ENCODE measurements at regions of chr6 and their contacts with region 1.

Region 1: GRCh38 chr6:39114704-39115599 is at the start of gene SAYSD1:
- DNase-seq: peak; percentile 89 to 94 (median 93)
- H3K4me3 ChIP-seq: peak within 1 kb of the TSS; percentile 79 to 97
- H3K4me3 Mint-ChIP-seq: peak within 1 kb of the TSS; percentile 97 to 99 (median 98)
- H3K27ac ChIP-seq: peak within 1 kb of the TSS; percentile 79
- H3K27ac Mint-ChIP-seq: peak within 1 kb of the TSS; percentile 92 to 99 (median 98)
- H3K4me1 ChIP-seq: peaks cover 44% of the 10 kb centered on the region
- H3K4me1 Mint-ChIP-seq: peaks cover 40 to 58% (median 48%) of the 10 kb centered on the region in 4 donors
- H3K27me3 ChIP-seq: no peaks in the 10 kb centered on the region
- H3K27me3 Mint-ChIP-seq: no peaks in the 10 kb centered on the region
- total RNA-seq, gene SAYSD1: 21.6 to 22.4 TPM

Region 2: GRCh38 chr6:38702558-38703397 is 412.2 kb before region 1 on chr6 and contains the start of gene GLO1:
- CTCF ChIA-PET with region 1: no interaction called
- POLR2A ChIA-PET with region 1: no interaction called
- intact Hi-C with region 1: loop called (anchors 5 kb)
- DNase-seq: peak; percentile 94 to 98 (median 95)
- H3K4me3 ChIP-seq: peak within 1 kb of the TSS; percentile 56 to 91
- H3K4me3 Mint-ChIP-seq: peak within 1 kb of the TSS; percentile 83 to 96 (median 88)
- H3K27ac ChIP-seq: peak within 1 kb of the TSS; percentile 85
- H3K27ac Mint-ChIP-seq: peak within 1 kb of the TSS; percentile 83 to 98 (median 92)
- H3K4me1 ChIP-seq: peaks cover 11% of the 10 kb centered on the region
- H3K4me1 Mint-ChIP-seq: peaks cover 21 to 38% (median 27%) of the 10 kb centered on the region in 4 donors
- H3K27me3 ChIP-seq: no peaks in the 10 kb centered on the region
- H3K27me3 Mint-ChIP-seq: peaks cover 3 to 7% of the 10 kb centered on the region in 2 donors
- total RNA-seq, gene GLO1: 28.3 to 28.7 TPM

Region 3: GRCh38 chr6:39228992-39229767 is 114.2 kb after region 1 on chr6 and contains the start of gene KCNK5:
- CTCF ChIA-PET with region 1: no interaction called
- POLR2A ChIA-PET with region 1: no interaction called
- intact Hi-C with region 1: loop called (anchors 2 kb)
- DNase-seq: peak; percentile 46 to 66 (median 51)
- H3K4me3 ChIP-seq: peak within 1 kb of the TSS; percentile 69 to 70
- H3K4me3 Mint-ChIP-seq: peak within 1 kb of the TSS; percentile 58 to 86 (median 78)
- H3K27ac ChIP-seq: no peak within 1 kb of the TSS
- H3K27ac Mint-ChIP-seq: peak within 1 kb of the TSS in 4 of 7 donors; percentile 29 to 88 (median 64)
- H3K4me1 ChIP-seq: peaks cover 54% of the 10 kb centered on the region
- H3K4me1 Mint-ChIP-seq: peaks cover 26 to 54% (median 37%) of the 10 kb centered on the region in 4 donors
- H3K27me3 ChIP-seq: no peaks in the 10 kb centered on the region
- H3K27me3 Mint-ChIP-seq: peaks cover 0 to 2% of the 10 kb centered on the region in 2 donors
- total RNA-seq, gene KCNK5: 0.79 to 0.83 TPM

Region 4: GRCh38 chr6:39369987-39370386 is 255.0 kb after region 1 on chr6:
- CTCF ChIA-PET with region 1: no interaction called
- POLR2A ChIA-PET with region 1: no interaction called
- intact Hi-C with region 1: no loop called
- DNase-seq: no peak
- H3K4me3 ChIP-seq: no peak overlapping the region
- H3K4me3 Mint-ChIP-seq: no peak overlapping the region
- H3K27ac ChIP-seq: no peak overlapping the region
- H3K27ac Mint-ChIP-seq: no peak overlapping the region
- H3K4me1 ChIP-seq: no peaks in the 10 kb centered on the region
- H3K4me1 Mint-ChIP-seq: no peaks in the 10 kb centered on the region
- H3K27me3 ChIP-seq: no peaks in the 10 kb centered on the region
- H3K27me3 Mint-ChIP-seq: peaks cover 12 to 23% of the 10 kb centered on the region in 2 donors

Region 5: GRCh38 chr6:39724787-39725631 is 610.1 kb after region 1 on chr6 and contains the start of gene KIF6:
- CTCF ChIA-PET with region 1: no interaction called
- POLR2A ChIA-PET with region 1: no interaction called
- intact Hi-C with region 1: loop called (anchors 10 kb)
- DNase-seq: peak; percentile 58 to 71 (median 66)
- H3K4me3 ChIP-seq: peak within 1 kb of the TSS; percentile 37 to 39
- H3K4me3 Mint-ChIP-seq: peak within 1 kb of the TSS; percentile 89 to 95 (median 92)
- H3K27ac ChIP-seq: no peak within 1 kb of the TSS
- H3K27ac Mint-ChIP-seq: peak within 1 kb of the TSS in 4 of 7 donors; percentile 63 to 83 (median 75)
- H3K4me1 ChIP-seq: no peaks in the 10 kb centered on the region
- H3K4me1 Mint-ChIP-seq: peaks cover 0 to 7% (median 4%) of the 10 kb centered on the region in 4 donors
- H3K27me3 ChIP-seq: no peaks in the 10 kb centered on the region
- H3K27me3 Mint-ChIP-seq: peaks cover 1 to 4% of the 10 kb centered on the region in 2 donors
- total RNA-seq, gene KIF6: not detected

Measured in CD4-positive, alpha-beta memory T cell (primary cell).